AG04449 (cell line): ENCODE measurements at regions of chr20 and their contacts with region 1.

Region 1: DNA sequence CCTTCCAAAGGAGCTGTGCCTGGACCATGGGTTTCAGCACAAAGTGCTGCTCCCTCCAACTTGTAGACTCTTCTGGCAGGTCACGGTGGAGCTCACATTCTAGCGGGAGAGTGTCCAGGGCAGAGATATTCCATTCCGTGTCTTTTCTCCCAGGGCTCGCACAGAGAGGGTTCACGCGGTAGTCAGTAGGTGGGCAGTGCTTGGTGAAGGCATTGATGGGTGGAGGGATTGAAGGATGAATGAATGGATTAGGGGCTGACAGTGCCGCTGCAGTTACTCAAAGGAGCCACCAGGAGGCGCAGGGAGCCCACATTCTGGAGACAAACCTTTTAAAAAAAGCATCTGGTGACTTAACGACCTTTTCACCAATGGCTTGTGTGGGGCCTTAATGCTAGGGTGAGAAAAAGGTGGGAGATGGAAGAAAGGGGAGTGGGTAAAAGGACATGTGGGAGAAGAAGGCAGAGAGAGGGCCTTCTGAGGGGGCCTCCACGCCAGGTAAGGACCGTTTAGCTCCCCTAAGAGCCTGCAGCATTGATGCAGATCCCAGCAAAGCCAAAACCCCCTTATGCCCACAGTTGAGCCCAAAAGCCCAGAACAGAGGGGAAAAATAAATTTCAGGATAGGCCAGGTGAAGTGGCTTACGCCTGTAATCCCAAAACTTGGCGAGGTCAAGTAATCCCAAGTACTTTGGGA is 17.5 kb upstream of the FAM110A start:
- DNase-seq: no peak
- H3K4me3 ChIP-seq: no peak overlapping the region
- CTCF ChIP-seq: peak; percentile 92

Region 2: DNA sequence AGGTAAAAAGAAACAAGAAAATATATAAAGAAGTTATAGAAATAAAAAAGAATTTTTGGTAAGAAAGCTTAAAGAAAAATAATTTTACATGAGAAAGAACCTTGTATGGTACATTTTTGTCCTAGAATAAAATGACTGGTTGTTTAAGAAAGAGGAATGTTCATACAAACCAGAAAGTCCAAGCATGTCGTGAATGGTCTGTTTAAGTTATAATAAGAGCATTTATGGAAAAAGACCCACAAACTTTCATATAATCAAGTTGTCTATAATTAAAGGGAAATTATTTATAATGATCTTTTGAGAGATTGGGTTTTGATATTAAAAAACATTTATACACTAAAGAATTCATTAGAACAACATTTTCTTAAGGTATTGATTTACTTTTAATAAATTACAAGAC is 10.3 kb before region 1 on chr20:
- CTCF ChIA-PET with region 1: interaction called, 20 read pairs
- POLR2A ChIA-PET with region 1: no interaction called
- DNase-seq: no peak
- H3K4me3 ChIP-seq: no peak overlapping the region
- CTCF ChIP-seq: no peak

Region 3: GRCh38 chr20:833450-834150 is 17.5 kb after region 1 on chr20 and contains the start of gene FAM110A:
- CTCF ChIA-PET with region 1: interaction called, 19 read pairs
- POLR2A ChIA-PET with region 1: interaction called, 3 read pairs
- DNase-seq: peak; percentile 38
- H3K4me3 ChIP-seq: peak within 1 kb of the TSS; percentile 87
- CTCF ChIP-seq: no peak

Region 4: DNA sequence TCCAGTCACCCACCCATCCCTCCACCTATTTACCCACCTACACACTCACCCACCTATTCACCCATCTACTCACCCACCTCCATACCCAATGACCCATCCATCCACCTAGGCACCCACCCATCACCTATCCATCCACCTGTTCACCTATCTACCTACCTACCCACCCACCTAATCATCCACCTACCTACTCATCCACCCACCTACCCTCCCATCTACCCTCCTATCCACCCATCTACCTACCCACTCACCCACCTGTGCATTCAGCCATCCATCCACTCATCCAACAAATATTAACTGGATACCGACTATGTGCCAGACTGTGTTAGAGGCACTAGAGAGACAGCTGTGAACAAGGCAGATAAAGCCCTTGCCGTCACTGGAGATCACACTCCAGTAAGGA is 145.7 kb after region 1 on chr20:
- CTCF ChIA-PET with region 1: interaction called, 355 read pairs
- POLR2A ChIA-PET with region 1: no interaction called
- DNase-seq: no peak
- H3K4me3 ChIP-seq: no peak overlapping the region
- CTCF ChIP-seq: no peak

Region 5: DNA sequence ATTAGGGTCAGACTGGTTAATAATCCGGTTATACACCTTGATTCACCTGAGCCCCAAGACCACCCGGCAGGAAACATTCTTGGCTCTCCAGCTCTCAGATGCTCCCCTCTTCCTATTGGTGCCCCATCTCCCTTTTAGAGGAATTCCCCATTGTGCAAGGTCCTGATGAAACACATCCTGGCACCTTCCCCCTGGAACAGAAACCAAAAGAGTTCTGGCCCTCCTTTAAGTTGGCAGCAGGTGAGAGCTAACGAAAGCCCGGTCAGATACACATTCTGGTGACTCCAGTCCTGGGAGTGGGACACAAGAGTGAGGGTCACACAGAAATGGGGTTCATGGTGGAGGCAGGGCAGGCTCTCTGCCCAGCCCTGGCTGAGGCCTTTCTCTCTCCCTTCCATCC is 153.8 kb after region 1 on chr20:
- CTCF ChIA-PET with region 1: interaction called, 13 read pairs
- POLR2A ChIA-PET with region 1: no interaction called
- DNase-seq: no peak
- H3K4me3 ChIP-seq: no peak overlapping the region
- CTCF ChIP-seq: no peak

Region 6: DNA sequence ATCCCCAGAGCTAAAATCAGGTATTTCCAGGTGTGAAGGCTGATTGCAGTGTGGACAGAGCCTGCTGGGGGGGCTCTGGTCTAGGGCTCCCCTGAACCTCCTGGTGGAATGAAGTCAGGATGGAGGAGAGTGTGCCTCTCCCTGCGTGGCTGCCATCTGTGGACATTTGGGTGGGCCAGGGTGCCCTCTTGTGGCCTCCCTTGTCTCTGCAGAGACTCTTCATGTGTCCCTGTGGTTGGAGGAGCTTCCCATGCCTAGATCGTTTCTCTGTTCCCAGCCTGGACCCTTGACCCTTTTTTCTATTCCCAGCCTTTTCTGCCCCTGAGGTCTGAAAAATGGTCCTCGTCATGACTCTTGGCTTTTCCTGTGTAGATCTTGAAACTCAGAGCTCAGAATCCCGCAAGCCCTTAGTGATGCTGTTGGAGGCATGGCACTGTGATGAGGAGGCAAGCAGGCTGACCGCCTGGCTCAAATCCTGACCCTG is 292.4 kb after region 1 on chr20:
- CTCF ChIA-PET with region 1: interaction called, 54 read pairs
- POLR2A ChIA-PET with region 1: no interaction called
- DNase-seq: no peak
- H3K4me3 ChIP-seq: no peak overlapping the region
- CTCF ChIP-seq: peak; percentile 87

Region 7: GRCh38 chr20:1212607-1213396 is 396.7 kb after region 1 on chr20:
- CTCF ChIA-PET with region 1: interaction called, 22 read pairs
- POLR2A ChIA-PET with region 1: no interaction called
- DNase-seq: peak; percentile 14
- H3K4me3 ChIP-seq: no peak overlapping the region
- CTCF ChIP-seq: peak; percentile 85